CD4-positive, alpha-beta memory T cell (primary cell): ENCODE measurements at regions of chr3 and their contacts with region 1.

Region 1: GRCh38 chr3:51568036-51568435 is 29.5 kb downstream of the RAD54L2 start:
- DNase-seq: no peak
- H3K4me3 ChIP-seq: no peak overlapping the region
- H3K4me3 Mint-ChIP-seq: no peak overlapping the region
- H3K27ac ChIP-seq: no peak overlapping the region
- H3K27ac Mint-ChIP-seq: peak overlapping the region in 4 of 7 donors; percentile 13 to 62 (median 38)
- H3K4me1 ChIP-seq: peaks cover 13% of the 10 kb centered on the region
- H3K4me1 Mint-ChIP-seq: peaks cover 20 to 34% (median 31%) of the 10 kb centered on the region in 4 donors
- H3K27me3 ChIP-seq: no peaks in the 10 kb centered on the region
- H3K27me3 Mint-ChIP-seq: no peaks in the 10 kb centered on the region

Region 2: GRCh38 chr3:51371943-51372557 is 196.0 kb before region 1 on chr3:
- CTCF ChIA-PET with region 1: no interaction called
- POLR2A ChIA-PET with region 1: no interaction called
- intact Hi-C with region 1: no loop called
- DNase-seq: peak in 4 of 5 donors; percentile 51 to 58 (median 52)
- H3K4me3 ChIP-seq: no peak overlapping the region
- H3K4me3 Mint-ChIP-seq: no peak overlapping the region
- H3K27ac ChIP-seq: no peak overlapping the region
- H3K27ac Mint-ChIP-seq: no peak overlapping the region
- H3K4me1 ChIP-seq: no peaks in the 10 kb centered on the region
- H3K4me1 Mint-ChIP-seq: peaks cover 0 to 2% (median 0%) of the 10 kb centered on the region in 4 donors
- H3K27me3 ChIP-seq: no peaks in the 10 kb centered on the region
- H3K27me3 Mint-ChIP-seq: peaks cover 2 to 10% of the 10 kb centered on the region in 2 donors

Region 3: GRCh38 chr3:51637941-51638471 is 70.0 kb after region 1 on chr3:
- CTCF ChIA-PET with region 1: no interaction called
- POLR2A ChIA-PET with region 1: no interaction called
- intact Hi-C with region 1: loop called (anchors 10 kb)
- DNase-seq: peak in 2 of 5 donors; percentile 6 to 19
- H3K4me3 ChIP-seq: no peak overlapping the region
- H3K4me3 Mint-ChIP-seq: no peak overlapping the region
- H3K27ac ChIP-seq: no peak overlapping the region
- H3K27ac Mint-ChIP-seq: peak overlapping the region in 2 of 7 donors; percentile 27 to 29
- H3K4me1 ChIP-seq: no peaks in the 10 kb centered on the region
- H3K4me1 Mint-ChIP-seq: peaks cover 0 to 2% (median 0%) of the 10 kb centered on the region in 4 donors
- H3K27me3 ChIP-seq: no peaks in the 10 kb centered on the region
- H3K27me3 Mint-ChIP-seq: no peaks in the 10 kb centered on the region

Region 4: GRCh38 chr3:51777985-51778384 is 209.9 kb after region 1 on chr3:
- CTCF ChIA-PET with region 1: no interaction called
- POLR2A ChIA-PET with region 1: no interaction called
- intact Hi-C with region 1: no loop called
- DNase-seq: no peak
- H3K4me3 ChIP-seq: no peak overlapping the region
- H3K4me3 Mint-ChIP-seq: no peak overlapping the region
- H3K27ac ChIP-seq: no peak overlapping the region
- H3K27ac Mint-ChIP-seq: no peak overlapping the region
- H3K4me1 ChIP-seq: no peaks in the 10 kb centered on the region
- H3K4me1 Mint-ChIP-seq: no peaks in the 10 kb centered on the region
- H3K27me3 ChIP-seq: no peaks in the 10 kb centered on the region
- H3K27me3 Mint-ChIP-seq: peaks cover 12 to 13% of the 10 kb centered on the region in 2 donors